ENCODE measurements at regions of chr10 and their contacts with region 1.

Region 1: DNA sequence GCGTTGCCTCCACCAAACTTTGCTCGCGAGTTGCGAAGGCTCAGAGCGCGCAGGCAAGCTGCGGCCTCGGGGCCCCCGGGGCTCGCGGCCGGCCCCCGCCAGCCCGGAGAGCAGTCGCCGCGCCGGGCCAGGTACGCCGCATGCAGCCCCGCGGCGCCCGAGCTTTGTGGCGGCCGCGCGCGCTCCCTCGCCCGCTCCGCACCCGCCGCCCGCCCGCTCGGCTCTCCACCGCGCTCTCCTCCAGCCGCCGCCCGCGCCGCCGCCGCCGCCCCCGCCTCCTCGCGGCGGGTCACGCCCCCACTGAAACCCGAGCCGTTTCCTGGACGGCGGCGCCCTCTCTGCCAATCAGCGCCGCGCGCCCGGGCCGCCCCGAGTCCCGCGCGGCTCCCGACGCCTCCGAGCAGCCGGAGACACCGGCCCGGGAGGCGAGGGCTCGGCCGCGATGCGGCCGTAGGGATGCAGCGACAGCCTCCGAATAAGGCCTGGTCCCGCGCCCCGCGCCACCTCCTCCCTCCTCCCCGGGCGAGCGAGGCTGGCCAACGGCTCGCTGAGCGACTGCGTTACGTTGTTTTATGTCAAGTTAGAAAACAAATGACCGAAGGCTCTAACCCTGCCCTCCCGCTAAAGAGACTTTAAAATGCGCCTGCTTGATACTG is at the start of gene FGFR2:
- DNase-seq: peak; percentile 92
- H3K4me3 ChIP-seq: peak within 1 kb of the TSS; percentile 80 to 90 (median 82)
- H3K27ac ChIP-seq: peak within 1 kb of the TSS; percentile 84 to 96 (median 89)
- H3K4me1 ChIP-seq: peaks cover 0 to 39% (median 20%) of the 10 kb centered on the region in 4 donors
- H3K27me3 ChIP-seq: no peaks in the 10 kb centered on the region
- CTCF ChIP-seq: no peak
- EP300 ChIP-seq: no peak
- POLR2A ChIP-seq: peak in 1 of 2 donors; percentile 34
- total RNA-seq, gene FGFR2: 71.5 to 143 (median 112) TPM

Region 2: GRCh38 chr10:121027371-121027770 is 571.0 kb before region 1 on chr10:
- intact Hi-C with region 1: loop called (anchors 2 kb)
- DNase-seq: peak; percentile 74
- H3K4me3 ChIP-seq: no peak overlapping the region
- H3K27ac ChIP-seq: peak overlapping the region in 3 of 4 donors; percentile 54 to 73 (median 70)
- H3K4me1 ChIP-seq: peaks cover 0 to 55% (median 38%) of the 10 kb centered on the region in 4 donors
- H3K27me3 ChIP-seq: no peaks in the 10 kb centered on the region
- CTCF ChIP-seq: no peak
- EP300 ChIP-seq: peak in 2 of 4 donors; percentile 75 to 86
- POLR2A ChIP-seq: no peak

Region 3: DNA sequence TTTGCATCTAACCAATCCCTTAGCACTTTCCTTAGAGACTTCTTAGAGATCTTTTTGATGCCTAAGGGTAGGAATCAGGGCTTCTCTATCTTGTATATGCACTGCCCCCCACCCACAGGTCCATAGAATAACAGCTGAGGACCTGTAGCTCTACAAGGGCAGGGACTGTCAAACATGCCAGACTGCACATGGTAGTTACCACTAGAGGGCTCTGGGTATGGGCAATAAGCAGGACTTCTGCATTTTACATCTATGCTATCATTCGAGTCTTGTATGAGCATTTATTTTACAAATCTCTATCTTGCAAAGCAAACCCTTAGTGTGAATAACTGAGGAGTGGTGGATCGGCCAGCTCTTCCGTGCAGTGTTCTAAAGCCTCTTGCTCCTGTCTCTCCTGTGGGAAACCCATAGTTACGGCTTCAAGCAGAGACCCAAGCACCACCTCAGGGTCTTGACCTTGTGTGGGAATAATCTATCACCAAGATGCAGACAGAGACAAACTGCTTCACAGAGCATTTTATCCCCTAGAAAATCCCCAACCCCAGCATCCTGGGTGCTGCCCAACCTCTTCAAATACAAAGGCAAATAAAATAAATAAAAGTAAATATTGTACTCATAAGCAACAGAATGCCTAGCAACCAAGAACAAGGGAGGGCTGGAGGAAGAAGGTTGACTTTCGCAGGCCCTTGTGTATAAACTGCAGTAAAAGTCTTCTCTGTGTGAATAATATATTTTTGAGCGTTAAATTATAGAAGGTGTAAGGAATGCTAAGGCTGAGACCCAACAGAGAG is 527.9 kb before region 1 on chr10:
- intact Hi-C with region 1: loop called (anchors 5 kb)
- DNase-seq: no peak
- H3K4me3 ChIP-seq: no peak overlapping the region
- H3K27ac ChIP-seq: peak overlapping the region; percentile 64 to 79 (median 71)
- H3K4me1 ChIP-seq: peaks cover 0 to 55% (median 47%) of the 10 kb centered on the region in 4 donors
- H3K27me3 ChIP-seq: no peaks in the 10 kb centered on the region
- CTCF ChIP-seq: peak in 2 of 4 experiments; percentile 23 to 31
- EP300 ChIP-seq: peak in 1 of 4 donors; percentile 50
- POLR2A ChIP-seq: no peak

Region 4: DNA sequence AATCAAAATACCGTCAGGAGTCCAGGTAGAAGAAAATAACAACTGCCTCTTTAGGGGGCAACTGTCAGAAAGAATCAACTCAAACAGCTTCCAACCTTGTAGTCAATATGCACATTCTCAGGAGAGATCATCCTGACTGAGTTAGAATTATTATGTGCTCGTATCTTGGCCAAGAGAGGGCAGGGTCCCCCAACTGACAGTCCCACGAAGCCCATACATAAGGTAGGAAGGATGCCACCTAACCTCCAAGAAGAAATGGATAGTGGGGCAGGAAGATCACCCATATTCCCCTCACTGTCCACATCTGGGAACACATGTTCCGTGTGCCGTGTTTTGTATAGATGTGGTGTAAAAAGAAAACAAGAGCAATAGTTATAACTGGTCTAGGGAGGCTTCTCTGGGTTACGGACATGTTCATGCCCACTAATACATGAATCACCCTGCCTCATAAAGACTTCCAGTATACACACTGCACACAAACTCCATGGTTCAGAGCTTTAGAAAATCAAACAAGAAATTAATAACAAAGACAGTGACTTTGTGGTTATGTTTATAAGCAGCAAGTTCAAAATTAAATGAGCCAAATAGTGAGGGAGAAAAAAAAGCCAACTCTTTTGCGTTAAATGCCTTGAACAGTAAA is 295.7 kb before region 1 on chr10:
- intact Hi-C with region 1: loop called (anchors 5 kb)
- DNase-seq: no peak
- H3K4me3 ChIP-seq: no peak overlapping the region
- H3K27ac ChIP-seq: peak overlapping the region in 3 of 4 donors; percentile 49 to 72 (median 59)
- H3K4me1 ChIP-seq: peaks cover 0 to 55% (median 15%) of the 10 kb centered on the region in 4 donors
- H3K27me3 ChIP-seq: no peaks in the 10 kb centered on the region
- CTCF ChIP-seq: no peak
- EP300 ChIP-seq: peak in 1 of 4 donors; percentile 29
- POLR2A ChIP-seq: no peak

Region 5: DNA sequence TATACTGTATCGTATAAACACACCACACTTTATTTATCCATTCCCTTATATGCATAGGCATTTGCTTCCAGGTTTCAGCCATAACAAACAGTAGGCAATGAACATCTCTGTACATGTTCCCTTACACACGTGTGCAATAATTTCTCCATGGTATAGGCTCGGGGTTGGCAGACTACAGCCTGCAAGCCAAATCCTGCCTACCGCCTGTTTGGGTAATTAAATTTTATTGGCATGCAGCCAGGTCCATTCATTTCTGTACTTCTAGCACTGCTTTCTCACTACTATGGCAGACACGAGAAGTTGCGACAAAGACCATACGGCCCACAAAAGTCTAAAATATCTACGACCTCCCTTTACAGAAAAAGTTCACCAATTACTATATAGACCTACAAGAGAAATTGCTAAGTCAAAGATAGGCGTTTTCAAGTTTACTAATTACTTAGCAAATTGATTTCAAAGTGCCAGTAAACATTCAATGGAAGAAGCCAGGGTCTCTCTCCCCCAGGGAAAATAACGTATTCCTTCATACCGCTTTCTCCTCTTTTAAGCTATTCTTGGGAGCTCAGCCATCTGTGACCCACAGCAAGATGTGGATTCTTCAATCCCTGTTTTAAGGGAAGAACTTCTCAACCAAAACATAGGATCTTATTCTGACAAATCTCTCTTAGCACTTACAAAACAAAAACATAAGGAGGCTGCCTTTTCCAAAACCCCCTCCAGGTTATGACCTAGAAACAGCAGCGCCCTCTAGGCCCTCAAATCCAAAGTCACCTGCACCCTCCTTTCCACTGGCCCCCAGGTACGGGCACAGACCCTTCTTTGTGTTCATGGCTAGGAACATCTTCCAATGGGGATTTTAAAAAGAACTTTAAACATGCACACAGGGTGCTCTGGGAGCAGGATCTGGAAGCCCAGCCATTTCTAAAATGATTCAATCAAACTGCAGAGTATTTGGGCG is 100.5 kb before region 1 on chr10:
- intact Hi-C with region 1: loop called (anchors 10 kb)
- DNase-seq: no peak
- H3K4me3 ChIP-seq: no peak overlapping the region
- H3K27ac ChIP-seq: peak overlapping the region in 2 of 4 donors; percentile 17 to 35
- H3K4me1 ChIP-seq: peaks cover 0 to 20% (median 1%) of the 10 kb centered on the region in 4 donors
- H3K27me3 ChIP-seq: no peaks in the 10 kb centered on the region
- CTCF ChIP-seq: no peak
- EP300 ChIP-seq: no peak
- POLR2A ChIP-seq: no peak

Region 6: DNA sequence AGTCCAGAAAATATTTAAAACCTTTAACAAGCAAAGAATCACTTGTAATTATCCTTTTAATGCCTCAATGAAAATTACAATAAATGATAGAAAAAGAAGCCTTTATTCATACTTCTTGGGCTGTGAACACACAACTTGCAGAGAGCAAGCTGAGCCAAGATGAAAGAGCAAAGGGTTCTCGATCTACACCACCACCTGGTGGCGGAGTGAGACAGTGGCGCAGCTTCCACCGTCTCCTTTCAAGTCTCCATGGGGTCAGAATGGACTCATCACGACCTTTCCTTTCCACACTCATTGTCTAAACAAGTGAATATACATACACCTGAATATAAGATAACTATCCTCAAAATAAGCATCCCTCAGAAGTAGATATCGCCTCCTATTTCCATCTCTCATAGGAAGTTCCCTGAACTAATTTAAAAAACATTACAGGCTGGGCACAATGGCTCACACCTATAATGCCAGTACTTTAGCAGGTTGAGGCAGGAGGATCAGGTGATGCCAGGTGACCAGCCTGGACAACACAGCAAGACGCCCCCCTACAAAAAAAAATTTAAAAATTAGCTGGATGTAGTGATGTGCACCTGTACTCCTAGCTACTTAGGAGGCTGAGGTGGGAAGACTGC is 288.8 kb after region 1 on chr10:
- intact Hi-C with region 1: loop called (anchors 10 kb)
- DNase-seq: peak; percentile 75
- H3K4me3 ChIP-seq: no peak overlapping the region
- H3K27ac ChIP-seq: no peak overlapping the region
- H3K4me1 ChIP-seq: no peaks in the 10 kb centered on the region
- H3K27me3 ChIP-seq: no peaks in the 10 kb centered on the region
- CTCF ChIP-seq: peak; percentile 67 to 81 (median 77)
- EP300 ChIP-seq: no peak
- POLR2A ChIP-seq: no peak

Measured in sigmoid colon (tissue), 7 donors.